Activated CD8-positive, alpha-beta T cell treated with anti-CD3 and anti-CD28 coated beads, Interleukin-2, amount 10 ng/mL, durations not matched to agents 7 days and 5 days (primary cell): ENCODE measurements at regions of chr10 and their contacts with region 1.

Region 1: DNA sequence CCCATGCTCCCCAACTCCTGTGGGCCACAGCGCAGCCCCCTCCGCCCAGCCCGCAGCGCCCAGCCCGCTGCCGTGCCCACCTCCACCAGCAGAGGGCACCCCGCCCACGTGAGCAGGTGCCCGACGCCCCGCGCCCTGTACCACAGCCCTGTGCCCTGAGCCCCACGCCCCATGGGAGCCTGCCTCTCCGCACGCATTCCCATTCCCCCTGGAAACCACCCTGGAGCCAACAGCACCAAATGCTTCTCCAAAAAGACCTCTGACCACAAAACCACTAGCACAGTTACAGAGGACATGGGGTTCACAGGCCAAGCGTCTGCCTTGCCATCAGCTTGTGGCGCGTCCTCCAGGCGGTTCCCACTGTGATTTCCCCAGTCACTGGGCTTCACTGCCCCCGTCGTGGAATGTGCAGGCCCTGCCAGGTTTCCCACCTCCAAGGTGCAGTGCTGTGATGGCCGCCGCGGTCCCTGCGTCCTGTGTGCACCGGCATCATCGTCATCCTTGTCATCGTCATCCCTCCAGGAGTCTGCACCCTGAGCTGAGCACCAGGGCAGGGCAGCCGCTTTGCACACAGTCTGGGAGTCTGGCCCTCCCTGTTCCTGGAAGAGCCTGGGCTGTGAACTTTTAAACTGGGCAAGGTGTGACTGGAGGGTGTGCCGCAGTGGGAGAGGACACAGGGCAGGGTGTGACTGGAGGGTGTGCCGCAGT is 61.7 kb downstream of the PWWP2B start:
- DNase-seq: peak; percentile 64
- ATAC-seq: peak; percentile 77
- H3K4me3 Mint-ChIP-seq: no peak overlapping the region
- H3K27ac Mint-ChIP-seq: no peak overlapping the region
- H3K4me1 Mint-ChIP-seq: peaks cover 2% of the 10 kb centered on the region
- H3K27me3 Mint-ChIP-seq: no peaks in the 10 kb centered on the region

Region 2: DNA sequence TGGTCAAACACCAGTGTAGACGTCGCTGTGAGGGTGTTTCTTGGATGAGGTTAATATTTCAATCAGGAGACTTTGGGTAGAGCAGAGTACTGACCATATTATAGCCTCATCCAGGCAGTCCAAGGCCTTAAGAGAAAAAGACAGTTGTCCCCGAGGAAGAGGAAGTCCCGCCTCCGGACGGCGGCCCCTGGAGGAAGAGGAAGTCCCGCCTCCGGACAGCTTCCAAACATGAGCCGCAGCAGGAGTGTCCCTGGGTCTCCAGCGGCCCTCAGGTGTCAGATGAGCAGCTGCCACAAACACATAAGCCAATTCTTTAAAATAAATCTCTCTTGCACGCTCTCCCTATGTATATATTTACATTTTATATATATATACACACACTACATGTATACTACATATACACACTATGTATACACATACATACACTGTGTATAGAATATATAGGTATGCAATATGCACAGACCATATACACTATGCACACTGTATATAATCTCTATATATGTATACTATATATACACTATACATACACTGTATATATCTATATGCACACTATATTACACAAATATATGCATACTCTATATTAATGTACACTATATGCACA is 24.2 kb before region 1 on chr10:
- CTCF ChIA-PET with region 1: no interaction called
- POLR2A ChIA-PET with region 1: no interaction called
- DNase-seq: peak; percentile 70
- ATAC-seq: peak; percentile 75
- H3K4me3 Mint-ChIP-seq: peak overlapping the region; percentile 51
- H3K27ac Mint-ChIP-seq: peak overlapping the region; percentile 72
- H3K4me1 Mint-ChIP-seq: peaks cover 10% of the 10 kb centered on the region
- H3K27me3 Mint-ChIP-seq: no peaks in the 10 kb centered on the region

Region 3: GRCh38 chr10:132482090-132482800 is 23.5 kb after region 1 on chr10:
- CTCF ChIA-PET with region 1: no interaction called
- POLR2A ChIA-PET with region 1: no interaction called
- DNase-seq: no peak
- ATAC-seq: no peak
- H3K4me3 Mint-ChIP-seq: no peak overlapping the region
- H3K27ac Mint-ChIP-seq: no peak overlapping the region
- H3K4me1 Mint-ChIP-seq: no peaks in the 10 kb centered on the region
- H3K27me3 Mint-ChIP-seq: peaks cover 11% of the 10 kb centered on the region

Region 4: DNA sequence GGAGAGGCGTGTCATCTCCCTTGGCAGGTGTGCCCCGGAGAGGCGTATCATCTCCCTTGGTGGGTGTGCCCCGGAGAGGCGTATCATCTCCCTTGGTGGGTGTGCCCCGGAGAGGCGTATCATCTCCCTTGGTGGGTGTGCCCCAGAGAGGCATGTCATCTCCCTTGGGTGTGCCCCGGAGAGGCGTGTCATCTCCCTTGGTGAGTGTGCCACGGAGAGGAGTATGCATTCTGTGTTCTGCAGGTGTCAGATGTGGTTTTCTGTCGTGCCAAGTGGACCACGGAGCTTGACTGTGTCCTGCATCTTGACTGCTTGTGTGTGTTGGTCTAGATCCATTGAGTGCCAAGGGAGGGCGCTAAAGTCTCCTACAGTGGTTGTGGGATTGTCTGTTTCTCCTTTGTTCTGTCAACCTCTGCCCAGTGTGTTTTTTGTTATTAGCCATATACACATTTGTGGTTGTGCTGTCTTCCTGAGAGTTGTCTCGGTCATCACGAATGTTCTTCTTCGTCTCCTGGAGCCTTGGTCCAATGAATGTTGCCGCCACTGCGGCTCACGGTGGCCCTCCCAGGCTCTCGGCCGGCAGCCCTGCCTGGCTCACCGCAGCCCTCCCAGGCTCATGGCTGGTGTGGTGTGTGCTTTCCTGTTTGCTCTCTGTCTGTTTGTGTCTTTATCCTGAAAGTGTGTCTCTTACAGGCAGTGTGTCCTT is 175.6 kb after region 1 on chr10:
- CTCF ChIA-PET with region 1: interaction called, 18 read pairs
- POLR2A ChIA-PET with region 1: no interaction called
- DNase-seq: no peak
- ATAC-seq: no peak
- H3K4me3 Mint-ChIP-seq: no peak overlapping the region
- H3K27ac Mint-ChIP-seq: no peak overlapping the region
- H3K4me1 Mint-ChIP-seq: peaks cover 21% of the 10 kb centered on the region
- H3K27me3 Mint-ChIP-seq: peaks cover 3% of the 10 kb centered on the region